HEK293 (cell line): ENCODE measurements at regions of chr6 and their contacts with region 1.

Region 1: GRCh38 chr6:152552616-152553209 is 84.4 kb downstream of the SYNE1 start:
- H3K4me3 ChIP-seq: no peak overlapping the region
- H3K27ac ChIP-seq: no peak overlapping the region
- H3K4me1 ChIP-seq: no peaks in the 10 kb centered on the region
- CTCF ChIP-seq: peak; percentile 66

Region 2: DNA sequence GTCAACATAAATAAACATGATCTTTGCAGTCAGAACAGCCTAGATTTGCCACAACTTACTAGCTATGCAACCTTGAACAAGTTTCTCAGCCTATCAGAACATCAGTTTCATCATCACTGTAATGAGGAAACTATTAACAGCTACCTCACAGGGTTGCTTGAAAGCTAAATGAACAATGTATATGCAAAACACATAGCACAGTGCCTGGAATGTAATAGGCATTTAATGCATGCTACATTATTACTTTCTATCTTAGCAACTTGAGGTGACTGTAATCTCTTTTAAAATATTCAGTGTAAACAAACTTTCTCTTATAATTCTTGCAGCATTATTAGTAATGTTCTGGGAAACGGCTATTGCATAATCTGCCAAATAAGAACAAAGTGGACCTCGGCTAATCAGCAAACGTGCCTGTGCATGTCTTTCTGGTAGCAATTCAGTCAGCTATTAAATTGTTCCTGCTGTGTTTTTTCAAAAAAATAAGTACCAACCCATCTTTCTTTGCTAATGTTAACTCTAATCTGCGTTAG is 23.0 kb after region 1 on chr6:
- CTCF ChIA-PET with region 1: interaction called, 10 read pairs
- POLR2A ChIA-PET with region 1: no interaction called
- H3K4me3 ChIP-seq: no peak overlapping the region
- H3K27ac ChIP-seq: no peak overlapping the region
- H3K4me1 ChIP-seq: peaks cover 34% of the 10 kb centered on the region
- CTCF ChIP-seq: no peak

Region 3: GRCh38 chr6:152642989-152643388 is 90.3 kb after region 1 on chr6:
- CTCF ChIA-PET with region 1: interaction called, 80 read pairs
- POLR2A ChIA-PET with region 1: no interaction called
- H3K4me3 ChIP-seq: no peak overlapping the region
- H3K27ac ChIP-seq: no peak overlapping the region
- H3K4me1 ChIP-seq: no peaks in the 10 kb centered on the region
- CTCF ChIP-seq: peak; percentile 82

Region 4: GRCh38 chr6:152648105-152648504 is 95.4 kb after region 1 on chr6:
- CTCF ChIA-PET with region 1: interaction called, 80 read pairs
- POLR2A ChIA-PET with region 1: no interaction called
- H3K4me3 ChIP-seq: no peak overlapping the region
- H3K27ac ChIP-seq: no peak overlapping the region
- H3K4me1 ChIP-seq: no peaks in the 10 kb centered on the region
- CTCF ChIP-seq: no peak

Region 5: GRCh38 chr6:152669895-152670294 is 117.2 kb after region 1 on chr6:
- CTCF ChIA-PET with region 1: interaction called, 63 read pairs
- POLR2A ChIA-PET with region 1: no interaction called
- H3K4me3 ChIP-seq: no peak overlapping the region
- H3K27ac ChIP-seq: no peak overlapping the region
- H3K4me1 ChIP-seq: no peaks in the 10 kb centered on the region
- CTCF ChIP-seq: peak; percentile 41; the same call in 1 of the 2 replicates